ENCODE measurements at regions of chr22 and their contacts with region 1.

Region 1: DNA sequence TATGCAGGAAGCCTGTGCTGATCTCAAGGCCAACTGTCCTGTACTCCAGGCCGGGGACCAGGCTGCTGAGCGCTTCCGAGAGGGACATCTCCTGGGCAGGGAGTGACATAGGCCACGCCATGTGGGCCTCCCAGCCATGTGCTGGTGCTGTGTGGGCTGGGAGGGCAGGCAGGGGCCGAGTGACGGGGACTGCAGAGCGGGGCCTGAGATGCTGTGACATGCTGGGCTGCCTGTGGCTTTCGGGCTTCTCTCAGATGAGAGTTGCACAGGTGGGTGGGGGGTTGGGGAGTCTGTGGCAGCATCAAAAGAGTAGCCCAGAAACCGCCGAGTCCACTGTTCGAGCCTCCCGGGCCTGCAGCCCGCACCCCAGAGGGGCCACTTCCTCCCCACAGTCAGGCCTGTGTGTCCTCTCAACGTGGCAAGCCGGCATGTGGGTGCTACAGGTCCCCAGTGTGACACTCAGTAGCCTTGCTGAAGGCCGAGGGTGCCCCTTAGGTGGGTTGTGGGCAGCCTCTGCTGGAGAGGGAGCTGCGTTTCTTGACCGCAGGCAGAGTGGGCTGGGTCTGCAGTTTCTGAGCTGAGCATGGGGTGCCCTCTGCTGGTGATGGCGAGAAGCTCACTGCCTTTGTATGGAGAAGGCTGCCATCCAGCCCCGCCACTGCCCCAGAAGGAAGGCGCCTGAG is 101.2 kb downstream of the BCR start:
- DNase-seq: peak; percentile 65
- H3K4me3 Mint-ChIP-seq: no peak overlapping the region
- H3K27ac Mint-ChIP-seq: no peak overlapping the region
- H3K4me1 Mint-ChIP-seq: no peaks in the 10 kb centered on the region
- H3K27me3 Mint-ChIP-seq: no peaks in the 10 kb centered on the region

Region 2: GRCh38 chr22:23240639-23241389 is 40.7 kb before region 1 on chr22:
- intact Hi-C with region 1: loop called (anchors 5 kb)
- DNase-seq: no peak
- H3K4me3 Mint-ChIP-seq: no peak overlapping the region
- H3K27ac Mint-ChIP-seq: peak overlapping the region; percentile 58
- H3K4me1 Mint-ChIP-seq: peaks cover 47% of the 10 kb centered on the region
- H3K27me3 Mint-ChIP-seq: no peaks in the 10 kb centered on the region